GM10248 (cell line): ENCODE measurements at regions of chr1 and their contacts with region 1.

Region 1: GRCh38 chr1:66752000-66752592 is at the start of gene DYNLT5:
- DNase-seq: peak; percentile 17
- CTCF ChIP-seq: peak; percentile 9

Region 2: GRCh38 chr1:66764994-66765578 is 13.0 kb after region 1 on chr1:
- CTCF ChIA-PET with region 1: interaction called, 10 read pairs
- POLR2A ChIA-PET with region 1: no interaction called
- DNase-seq: peak; percentile 39
- CTCF ChIP-seq: peak; percentile 71